IMR-90 (cell line): ENCODE measurements at regions of chr5 and their contacts with region 1.

Region 1: DNA sequence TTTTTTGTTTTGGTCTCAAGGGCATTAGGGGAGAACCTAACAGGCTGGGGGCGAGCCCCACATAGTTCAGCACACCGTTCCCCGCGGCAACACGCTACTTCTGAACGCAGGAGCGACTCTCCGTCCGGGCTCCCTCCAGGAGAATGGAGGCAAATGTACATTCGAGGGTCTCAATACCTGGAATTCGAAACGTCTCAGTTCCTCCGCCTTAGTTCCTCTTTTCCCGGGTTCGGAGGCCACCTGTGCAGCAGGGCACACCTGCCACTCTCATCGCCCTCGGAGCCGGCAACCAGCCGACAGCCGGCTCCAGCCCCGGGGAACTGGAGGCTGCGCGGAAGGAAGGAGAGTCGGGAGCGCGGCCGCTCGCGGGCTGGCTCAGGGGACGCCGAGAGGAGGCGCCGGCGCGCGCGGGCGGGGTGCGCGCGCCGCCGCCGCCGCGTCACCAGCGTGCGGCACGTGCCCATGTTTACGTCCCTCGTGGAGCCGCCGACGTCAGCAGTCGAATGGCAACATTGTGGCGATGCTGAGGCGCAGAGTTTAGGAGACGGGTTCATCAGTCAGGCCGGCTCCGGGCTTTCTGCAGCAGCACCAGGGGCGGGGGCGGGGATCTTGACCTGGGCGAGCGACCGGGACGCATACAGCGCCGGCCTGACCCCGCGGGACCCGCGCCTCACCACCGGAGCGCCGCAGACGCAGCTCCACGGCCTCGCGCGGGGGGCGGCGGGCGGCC is at the start of gene JMY:
- DNase-seq: peak; percentile 85
- ATAC-seq: peak; percentile 93
- H3K4me3 ChIP-seq: peak within 1 kb of the TSS; percentile 76
- H3K27ac ChIP-seq: peak within 1 kb of the TSS; percentile 51
- H3K4me1 ChIP-seq: peaks cover 1% of the 10 kb centered on the region; the same call in 1 of the 2 replicates
- H3K27me3 ChIP-seq: no peaks in the 10 kb centered on the region
- CTCF ChIP-seq: peak; percentile 36
- POLR2A ChIP-seq: peak; percentile 74
- RAD21 ChIP-seq: no peak; the same call in 1 of the 2 replicates
- total RNA-seq, gene JMY: 3.2 and 5.6 TPM in 2 replicates

Region 2: GRCh38 chr5:77775790-77776553 is 1459.8 kb before region 1 on chr5 and contains the start of gene TBCA:
- CTCF ChIA-PET with region 1: no interaction called
- POLR2A ChIA-PET with region 1: no interaction called
- dilution Hi-C with region 1: no loop called
- in situ Hi-C with region 1: no loop called
- intact Hi-C with region 1: loop called (anchors 10 kb)
- DNase-seq: peak; percentile 91
- ATAC-seq: peak; percentile 96
- H3K4me3 ChIP-seq: peak within 1 kb of the TSS; percentile 74
- H3K27ac ChIP-seq: peak within 1 kb of the TSS; percentile 88
- H3K4me1 ChIP-seq: peaks cover 6% of the 10 kb centered on the region; the same call in 1 of the 2 replicates
- H3K27me3 ChIP-seq: no peaks in the 10 kb centered on the region
- CTCF ChIP-seq: peak; percentile 22; the same call in 1 of the 2 replicates
- POLR2A ChIP-seq: peak; percentile 81
- RAD21 ChIP-seq: 0 out of 2 replicates have a peak, but pooled peaks have one; percentile 13
- total RNA-seq, gene TBCA: 6.1 and 28.6 TPM in 2 replicates

Region 3: DNA sequence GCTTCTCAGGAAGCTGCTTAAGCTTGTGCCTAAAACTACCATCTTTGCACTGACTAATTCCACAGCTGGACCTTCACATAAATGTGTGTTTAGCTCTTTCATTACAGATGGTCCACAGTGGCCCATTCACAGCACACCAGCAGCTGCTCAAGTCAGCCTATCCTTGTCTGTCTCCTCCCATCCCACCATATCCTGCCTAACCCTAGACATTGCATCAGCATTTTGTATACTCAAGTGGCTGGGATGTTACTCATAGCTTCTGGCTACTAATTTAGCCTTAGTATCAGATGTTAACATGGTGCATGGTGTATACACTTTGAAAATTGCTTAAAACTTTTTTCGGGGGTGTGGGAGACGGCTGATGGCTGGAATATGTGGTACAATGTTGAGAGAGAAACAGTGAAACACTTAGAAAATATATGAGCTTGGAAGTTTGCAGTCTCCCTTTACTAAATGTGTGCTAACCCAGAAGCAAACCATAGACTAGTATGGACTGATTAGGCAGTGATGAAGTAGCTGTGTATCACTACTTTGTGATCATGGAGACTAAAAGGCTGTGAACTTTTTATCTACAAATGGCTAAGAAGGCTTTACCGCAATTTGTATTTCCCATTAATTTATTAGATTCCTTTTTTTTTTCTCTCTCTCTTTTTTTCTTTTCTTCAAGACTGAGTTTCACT is 83.3 kb after region 1 on chr5:
- CTCF ChIA-PET with region 1: no interaction called
- POLR2A ChIA-PET with region 1: no interaction called
- dilution Hi-C with region 1: no loop called
- in situ Hi-C with region 1: no loop called
- intact Hi-C with region 1: loop called (anchors 5 kb)
- DNase-seq: peak; percentile 99
- ATAC-seq: peak; percentile 100
- H3K4me3 ChIP-seq: no peak overlapping the region
- H3K27ac ChIP-seq: peak overlapping the region; percentile 19; the same call in 1 of the 2 replicates
- H3K4me1 ChIP-seq: no peaks in the 10 kb centered on the region
- H3K27me3 ChIP-seq: no peaks in the 10 kb centered on the region
- CTCF ChIP-seq: no peak
- POLR2A ChIP-seq: no peak
- RAD21 ChIP-seq: no peak

Region 4: GRCh38 chr5:79357398-79357797 is 121.6 kb after region 1 on chr5:
- CTCF ChIA-PET with region 1: no interaction called
- POLR2A ChIA-PET with region 1: no interaction called
- dilution Hi-C with region 1: no loop called
- in situ Hi-C with region 1: no loop called
- intact Hi-C with region 1: no loop called
- DNase-seq: peak; percentile 35
- ATAC-seq: no peak
- H3K4me3 ChIP-seq: no peak overlapping the region
- H3K27ac ChIP-seq: no peak overlapping the region
- H3K4me1 ChIP-seq: no peaks in the 10 kb centered on the region
- H3K27me3 ChIP-seq: no peaks in the 10 kb centered on the region
- CTCF ChIP-seq: no peak
- POLR2A ChIP-seq: no peak
- RAD21 ChIP-seq: no peak

Region 5: DNA sequence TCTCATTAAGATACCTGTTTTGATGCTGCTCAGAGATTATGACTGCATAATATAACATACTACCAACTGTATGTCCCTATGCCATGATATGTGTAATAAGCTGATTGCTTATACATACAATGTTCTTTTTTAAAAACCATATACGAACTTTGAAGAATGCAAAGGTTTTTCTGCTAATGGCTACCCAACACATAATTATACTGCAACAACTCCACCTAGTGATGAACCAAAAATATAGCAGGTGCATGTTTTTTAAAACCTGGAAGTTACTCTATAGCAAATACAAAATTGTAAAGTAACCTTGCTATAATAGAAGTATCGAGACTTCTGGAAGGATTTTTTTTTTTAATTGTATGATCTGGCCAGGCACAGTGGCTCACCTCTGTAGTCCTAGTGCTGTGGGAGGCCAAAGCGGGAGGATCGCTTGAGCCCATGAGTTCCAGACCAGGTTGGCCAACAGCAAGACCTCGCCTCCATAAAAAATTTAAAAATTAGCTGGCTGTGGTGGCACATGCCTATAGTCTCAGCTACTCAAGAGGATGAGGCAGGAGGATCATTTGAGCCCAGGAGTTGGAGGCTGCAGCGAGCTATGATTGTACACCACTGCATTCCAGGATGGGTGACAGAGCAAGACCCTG is 229.0 kb after region 1 on chr5:
- CTCF ChIA-PET with region 1: no interaction called
- POLR2A ChIA-PET with region 1: no interaction called
- dilution Hi-C with region 1: no loop called
- in situ Hi-C with region 1: no loop called
- intact Hi-C with region 1: loop called (anchors 5 kb)
- DNase-seq: peak; percentile 53
- ATAC-seq: peak; percentile 86
- H3K4me3 ChIP-seq: no peak overlapping the region
- H3K27ac ChIP-seq: no peak overlapping the region
- H3K4me1 ChIP-seq: no peaks in the 10 kb centered on the region
- H3K27me3 ChIP-seq: no peaks in the 10 kb centered on the region
- CTCF ChIP-seq: peak; percentile 76
- POLR2A ChIP-seq: no peak
- RAD21 ChIP-seq: peak; percentile 75

Region 6: GRCh38 chr5:79514391-79515105 is 278.7 kb after region 1 on chr5:
- CTCF ChIA-PET with region 1: no interaction called
- POLR2A ChIA-PET with region 1: no interaction called
- dilution Hi-C with region 1: no loop called
- in situ Hi-C with region 1: no loop called
- intact Hi-C with region 1: loop called (anchors 2 kb)
- DNase-seq: peak; percentile 94
- ATAC-seq: peak; percentile 67
- H3K4me3 ChIP-seq: peak overlapping the region; percentile 49
- H3K27ac ChIP-seq: peak overlapping the region; percentile 49
- H3K4me1 ChIP-seq: no peaks in the 10 kb centered on the region
- H3K27me3 ChIP-seq: no peaks in the 10 kb centered on the region
- CTCF ChIP-seq: no peak
- POLR2A ChIP-seq: peak; percentile 92
- RAD21 ChIP-seq: no peak

Region 7: GRCh38 chr5:79573983-79574890 is 338.4 kb after region 1 on chr5:
- CTCF ChIA-PET with region 1: no interaction called
- POLR2A ChIA-PET with region 1: no interaction called
- dilution Hi-C with region 1: no loop called
- in situ Hi-C with region 1: no loop called
- intact Hi-C with region 1: no loop called
- DNase-seq: no peak
- ATAC-seq: peak; percentile 59
- H3K4me3 ChIP-seq: no peak overlapping the region
- H3K27ac ChIP-seq: no peak overlapping the region
- H3K4me1 ChIP-seq: peaks cover 2% of the 10 kb centered on the region; the same call in 1 of the 2 replicates
- H3K27me3 ChIP-seq: no peaks in the 10 kb centered on the region; the same call in 1 of the 2 replicates
- CTCF ChIP-seq: no peak
- POLR2A ChIP-seq: no peak
- RAD21 ChIP-seq: no peak

Region 8: DNA sequence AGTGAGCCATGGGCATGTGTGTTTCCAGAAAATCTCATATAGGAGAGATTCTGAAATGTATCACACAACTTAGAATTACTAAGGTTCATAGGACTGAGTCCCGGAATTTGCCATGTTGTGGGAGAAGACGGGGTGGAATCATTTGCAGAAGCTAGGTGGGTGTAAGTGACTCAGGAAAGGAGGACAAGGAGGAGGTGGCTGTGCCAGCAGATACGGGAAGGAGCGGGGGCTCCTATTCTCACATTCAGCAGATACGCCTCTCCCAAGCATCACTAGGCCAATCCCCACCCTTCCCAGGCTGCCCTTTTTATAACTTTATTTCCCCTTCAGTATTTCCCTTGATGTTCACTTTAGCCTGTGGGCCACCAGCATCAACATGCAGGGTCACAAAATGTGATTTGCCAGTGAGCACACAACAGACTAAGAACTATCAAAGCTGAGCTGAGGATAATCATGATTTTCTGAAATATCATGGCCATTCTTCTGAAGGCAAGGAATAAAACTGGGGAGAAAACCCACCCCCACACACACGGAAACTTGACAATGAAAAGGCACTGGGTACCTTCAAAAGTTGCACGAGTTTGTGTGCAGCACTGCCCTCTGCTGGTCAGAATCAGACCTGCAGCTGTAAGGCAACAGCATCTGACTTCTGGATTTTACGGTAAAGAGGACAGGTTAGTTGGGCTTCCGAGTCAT is 622.1 kb after region 1 on chr5:
- CTCF ChIA-PET with region 1: no interaction called
- POLR2A ChIA-PET with region 1: no interaction called
- dilution Hi-C with region 1: no loop called
- in situ Hi-C with region 1: no loop called
- intact Hi-C with region 1: loop called (anchors 10 kb)
- DNase-seq: peak; percentile 55
- ATAC-seq: peak; percentile 75
- H3K4me3 ChIP-seq: no peak overlapping the region
- H3K27ac ChIP-seq: no peak overlapping the region
- H3K4me1 ChIP-seq: no peaks in the 10 kb centered on the region
- H3K27me3 ChIP-seq: peaks cover 9% of the 10 kb centered on the region
- CTCF ChIP-seq: peak; percentile 86
- POLR2A ChIP-seq: no peak
- RAD21 ChIP-seq: peak; percentile 84